Activated CD4-positive, alpha-beta memory T cell treated with anti-CD3 and anti-CD28 coated beads, Interleukin-2, amount 10 ng/mL, durations not matched to agents 7 days and 5 days (primary cell): ENCODE measurements at regions of chr6 and their contacts with region 1.

Region 1: DNA sequence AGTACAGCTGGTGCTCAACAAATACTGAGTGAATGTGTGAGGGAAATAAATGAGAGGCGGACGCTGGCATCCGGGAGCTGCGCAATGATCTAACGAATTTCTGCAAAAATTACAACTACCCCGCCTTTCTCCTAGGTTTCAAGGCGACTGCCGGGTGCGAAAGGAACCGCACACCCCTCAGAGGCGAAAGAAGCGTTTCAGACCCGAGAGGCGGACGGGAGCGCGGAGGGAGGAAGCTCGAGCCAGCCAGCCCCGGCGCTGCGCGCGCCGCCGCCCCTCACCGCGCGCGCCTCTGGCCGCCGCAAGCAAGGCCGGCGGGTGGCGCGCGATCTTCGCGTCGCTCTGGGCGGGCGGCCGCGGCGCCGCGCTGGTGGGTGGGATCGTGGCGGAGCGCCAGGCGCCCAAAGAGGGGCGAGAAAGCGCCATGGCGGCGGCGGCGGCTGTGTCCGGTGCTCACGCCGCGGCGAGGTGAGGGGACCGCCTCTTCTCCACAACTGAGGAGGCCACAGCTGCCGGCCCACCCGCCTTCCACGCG is at the start of gene BLTP3A:
- DNase-seq: peak; percentile 80
- H3K4me3 Mint-ChIP-seq: peak within 1 kb of the TSS; percentile 91
- H3K27ac Mint-ChIP-seq: peak within 1 kb of the TSS; percentile 88
- H3K4me1 Mint-ChIP-seq: peaks cover 28% of the 10 kb centered on the region
- H3K27me3 Mint-ChIP-seq: no peaks in the 10 kb centered on the region
- total RNA-seq, gene BLTP3A: 12.3 to 12.6 TPM

Region 2: DNA sequence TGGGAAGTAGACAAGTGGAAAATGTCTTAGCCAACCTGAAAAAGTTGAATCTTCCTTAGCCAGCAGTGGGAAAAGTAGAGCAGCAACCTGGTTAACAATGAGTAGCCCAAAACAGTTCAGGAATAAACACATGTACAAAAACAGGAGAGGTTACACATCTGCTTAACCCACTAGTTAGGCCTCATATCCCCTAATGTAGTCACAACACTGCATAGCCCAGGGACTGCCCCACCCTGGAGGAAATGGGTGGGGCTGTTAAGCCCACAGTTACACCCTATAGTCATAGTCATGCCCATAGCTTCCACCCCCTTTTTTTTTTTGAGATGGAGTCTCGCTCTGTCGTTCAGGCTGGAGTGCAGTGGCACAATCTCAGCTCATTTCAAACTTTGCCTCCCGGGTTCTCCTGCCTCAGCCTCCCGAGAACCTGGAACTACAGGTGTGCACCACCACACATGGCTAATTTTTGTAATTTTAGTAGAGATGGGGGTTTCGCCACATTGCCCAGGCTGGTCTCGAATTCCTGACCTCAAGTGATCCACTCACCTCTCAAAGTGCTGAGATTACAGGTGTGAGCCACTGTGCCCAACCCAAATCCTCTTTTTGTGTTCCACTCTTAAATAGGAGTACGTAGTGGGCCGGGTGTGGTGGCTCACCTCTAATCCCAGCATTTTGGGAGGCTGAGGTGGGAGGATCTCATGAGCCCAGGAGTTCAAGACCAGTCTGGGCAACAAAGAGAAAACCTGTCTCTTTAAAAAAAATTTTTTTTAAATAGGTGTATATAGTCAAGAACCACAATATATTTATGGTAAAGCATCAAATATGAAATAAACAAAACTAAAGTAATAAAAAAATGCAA is 119.7 kb before region 1 on chr6:
- CTCF ChIA-PET with region 1: no interaction called
- POLR2A ChIA-PET with region 1: interaction called, 12 read pairs
- DNase-seq: peak; percentile 84
- H3K4me3 Mint-ChIP-seq: peak overlapping the region; percentile 75
- H3K27ac Mint-ChIP-seq: peak overlapping the region; percentile 98
- H3K4me1 Mint-ChIP-seq: peaks cover 62% of the 10 kb centered on the region
- H3K27me3 Mint-ChIP-seq: no peaks in the 10 kb centered on the region

Region 3: GRCh38 chr6:34729631-34730470 is 61.9 kb before region 1 on chr6:
- CTCF ChIA-PET with region 1: no interaction called
- POLR2A ChIA-PET with region 1: no interaction called
- DNase-seq: no peak
- H3K4me3 Mint-ChIP-seq: no peak overlapping the region
- H3K27ac Mint-ChIP-seq: no peak overlapping the region
- H3K4me1 Mint-ChIP-seq: no peaks in the 10 kb centered on the region
- H3K27me3 Mint-ChIP-seq: no peaks in the 10 kb centered on the region

Region 4: DNA sequence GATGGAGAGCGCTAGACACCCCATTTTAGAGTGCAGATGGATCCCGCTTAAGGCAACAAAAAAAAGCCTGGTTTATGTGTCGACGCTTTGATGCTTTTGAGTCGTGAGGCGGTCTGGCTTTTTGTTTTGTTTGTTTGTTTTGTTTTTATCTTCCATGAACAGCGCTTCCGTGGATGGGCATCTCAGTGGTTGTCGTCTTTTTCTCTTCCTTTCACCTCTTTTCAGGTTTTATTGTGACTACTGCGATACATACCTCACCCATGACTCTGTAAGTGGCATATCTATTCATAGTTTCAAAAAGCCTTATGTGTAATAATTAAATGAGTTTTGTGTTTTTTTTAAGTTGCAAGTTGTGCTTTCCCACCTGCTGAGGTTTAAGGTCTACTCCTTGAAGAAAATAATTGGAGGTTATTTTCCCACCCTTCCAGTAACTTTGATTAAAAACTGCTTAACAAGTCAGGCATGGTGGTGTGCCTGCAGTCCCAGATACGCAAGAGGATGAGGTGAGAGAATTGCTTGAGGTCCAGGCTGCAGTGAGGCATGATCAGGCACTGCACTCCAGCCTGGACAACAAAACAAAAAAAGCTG is 34.0 kb before region 1 on chr6:
- CTCF ChIA-PET with region 1: interaction called, 19 read pairs
- POLR2A ChIA-PET with region 1: interaction called, 35 read pairs
- DNase-seq: no peak
- H3K4me3 Mint-ChIP-seq: no peak overlapping the region
- H3K27ac Mint-ChIP-seq: no peak overlapping the region
- H3K4me1 Mint-ChIP-seq: peaks cover 13% of the 10 kb centered on the region
- H3K27me3 Mint-ChIP-seq: no peaks in the 10 kb centered on the region

Region 5: GRCh38 chr6:34773916-34774315 is 17.9 kb before region 1 on chr6:
- CTCF ChIA-PET with region 1: no interaction called
- POLR2A ChIA-PET with region 1: interaction called, 11 read pairs
- DNase-seq: no peak
- H3K4me3 Mint-ChIP-seq: no peak overlapping the region
- H3K27ac Mint-ChIP-seq: no peak overlapping the region
- H3K4me1 Mint-ChIP-seq: peaks cover 11% of the 10 kb centered on the region
- H3K27me3 Mint-ChIP-seq: no peaks in the 10 kb centered on the region

Region 6: GRCh38 chr6:34806738-34807453 is 15.1 kb after region 1 on chr6:
- CTCF ChIA-PET with region 1: interaction called, 3 read pairs
- POLR2A ChIA-PET with region 1: interaction called, 24 read pairs
- DNase-seq: no peak
- H3K4me3 Mint-ChIP-seq: no peak overlapping the region
- H3K27ac Mint-ChIP-seq: no peak overlapping the region
- H3K4me1 Mint-ChIP-seq: peaks cover 7% of the 10 kb centered on the region
- H3K27me3 Mint-ChIP-seq: no peaks in the 10 kb centered on the region